Ascending aorta (tissue), 2 donors: ENCODE measurements at regions of chr6 and their contacts with region 1.

Region 1: GRCh38 chr6:10694302-10695085 is at the starts of genes C6orf52 and PAK1IP1:
- DNase-seq: peak; percentile 77 to 97
- H3K4me3 ChIP-seq: peak within 1 kb of the TSS; percentile 72 to 87
- H3K27ac ChIP-seq: peak within 1 kb of the TSS; percentile 85 to 95
- H3K4me1 ChIP-seq: peaks cover 0 to 23% of the 10 kb centered on the region in 2 donors
- H3K27me3 ChIP-seq: no peaks in the 10 kb centered on the region
- CTCF ChIP-seq: no peak
- total RNA-seq, gene C6orf52: not detected
- total RNA-seq, gene PAK1IP1: 6.1 TPM

Region 2: DNA sequence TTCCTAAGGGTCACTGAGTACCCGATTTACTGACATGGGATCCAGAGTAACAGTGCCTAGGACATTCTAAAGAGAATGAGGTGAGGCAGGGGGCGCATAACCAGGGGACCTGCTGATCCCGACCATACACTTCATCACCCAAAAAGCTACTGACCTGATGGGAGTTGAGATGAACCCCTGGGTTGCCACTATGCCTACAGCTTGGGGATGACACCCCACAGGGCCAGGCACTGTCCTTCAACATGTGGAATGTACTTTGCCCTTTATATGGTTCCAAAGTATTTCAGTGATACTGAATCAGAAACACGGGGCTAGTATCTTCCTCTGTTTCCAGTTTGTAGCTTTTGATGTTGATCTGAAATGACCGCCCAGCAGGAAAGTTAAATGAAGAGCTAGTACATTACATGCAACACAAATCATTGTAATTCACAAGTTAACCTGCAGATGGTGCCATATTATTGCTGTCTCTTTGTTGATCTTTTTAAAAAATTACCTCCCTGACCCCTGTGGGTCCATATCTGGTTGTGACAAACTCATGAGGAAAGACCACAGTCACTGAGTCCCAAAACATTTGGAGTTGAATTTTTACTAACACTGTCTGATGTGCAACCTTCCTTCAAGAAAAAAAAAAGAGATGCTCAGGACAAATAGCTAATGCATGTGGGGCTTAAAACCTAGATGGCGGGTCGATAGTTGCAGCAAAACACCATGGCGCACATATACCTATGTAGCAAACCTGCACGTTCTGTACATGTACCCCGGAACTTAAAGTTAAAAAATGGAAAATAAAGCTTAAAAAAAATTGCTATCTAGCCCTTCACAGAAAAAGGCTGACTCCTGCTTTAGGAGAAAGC is 216.1 kb before region 1 on chr6:
- intact Hi-C with region 1: no loop called
- DNase-seq: no peak
- H3K4me3 ChIP-seq: no peak overlapping the region
- H3K27ac ChIP-seq: no peak overlapping the region
- H3K4me1 ChIP-seq: no peaks in the 10 kb centered on the region
- H3K27me3 ChIP-seq: no peaks in the 10 kb centered on the region
- CTCF ChIP-seq: peak; percentile 27 to 64 (median 52)

Region 3: DNA sequence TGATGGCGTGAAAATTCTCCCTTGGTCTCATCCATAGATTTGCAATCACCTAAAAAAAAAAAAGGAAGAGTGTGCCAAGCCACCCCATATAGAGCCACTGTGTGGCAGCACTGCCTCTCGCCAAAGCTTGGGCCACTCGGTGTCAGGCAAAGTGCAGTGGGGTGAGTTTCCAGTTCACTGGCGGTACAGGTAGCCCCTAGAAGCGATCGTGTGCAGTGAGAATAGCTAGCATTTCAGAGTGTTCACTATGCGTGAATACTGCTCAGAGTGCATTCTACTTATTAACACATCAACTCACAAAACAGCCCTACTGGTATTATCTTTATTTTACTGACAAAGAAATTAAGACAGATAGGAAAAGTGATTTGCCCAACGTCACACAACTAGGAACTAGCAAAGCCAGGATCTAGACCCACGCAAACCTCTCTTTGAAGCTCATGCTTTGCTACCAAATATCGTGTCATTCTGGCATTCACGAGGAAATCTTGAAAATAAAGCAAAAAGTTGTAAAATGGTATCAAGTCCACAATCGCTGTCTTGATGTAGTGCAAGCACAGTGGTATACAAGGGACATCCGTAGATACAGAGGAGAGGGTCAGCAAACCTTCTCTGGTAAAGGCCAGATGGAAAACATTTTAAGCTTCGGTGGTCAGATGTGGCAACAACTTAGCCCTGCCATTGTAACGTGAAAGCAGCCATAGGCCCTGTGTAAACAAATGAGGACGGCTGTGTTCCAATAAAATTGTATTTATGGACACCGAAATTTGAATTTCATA is 183.7 kb before region 1 on chr6:
- intact Hi-C with region 1: loop called (anchors 1 kb)
- DNase-seq: peak in 1 of 2 donors; percentile 75
- H3K4me3 ChIP-seq: peak overlapping the region in 1 of 2 donors; percentile 48
- H3K27ac ChIP-seq: peak overlapping the region; percentile 47 to 62
- H3K4me1 ChIP-seq: peaks cover 0 to 5% of the 10 kb centered on the region in 2 donors
- H3K27me3 ChIP-seq: no peaks in the 10 kb centered on the region
- CTCF ChIP-seq: peak; percentile 47 to 80 (median 71)

Region 4: GRCh38 chr6:10643201-10643651 is 51.3 kb before region 1 on chr6:
- intact Hi-C with region 1: loop called (anchors 2 kb)
- DNase-seq: no peak
- H3K4me3 ChIP-seq: no peak overlapping the region
- H3K27ac ChIP-seq: no peak overlapping the region
- H3K4me1 ChIP-seq: peaks cover 0 to 3% of the 10 kb centered on the region in 2 donors
- H3K27me3 ChIP-seq: no peaks in the 10 kb centered on the region
- CTCF ChIP-seq: no peak

Region 5: DNA sequence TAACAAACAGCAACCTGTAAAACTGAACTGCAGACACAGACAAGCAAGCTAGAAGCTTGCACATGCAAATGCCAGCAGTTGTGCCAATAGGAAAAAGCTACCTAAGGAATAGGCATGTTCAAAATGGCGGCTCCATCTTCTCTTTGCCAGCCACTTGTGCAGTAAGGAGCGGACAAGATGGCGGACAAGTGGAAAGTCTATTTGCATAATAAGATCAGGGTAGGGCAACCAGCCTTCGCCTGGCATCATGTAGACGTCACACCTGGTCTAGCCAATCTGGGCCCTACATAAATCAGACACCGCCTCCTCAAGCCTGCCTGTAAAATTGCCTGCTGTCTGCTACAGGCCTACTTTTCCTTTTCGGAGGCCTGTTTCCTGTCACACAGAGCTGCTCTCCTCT is 18.1 kb before region 1 on chr6:
- intact Hi-C with region 1: no loop called
- DNase-seq: no peak
- H3K4me3 ChIP-seq: no peak overlapping the region
- H3K27ac ChIP-seq: no peak overlapping the region
- H3K4me1 ChIP-seq: no peaks in the 10 kb centered on the region
- H3K27me3 ChIP-seq: no peaks in the 10 kb centered on the region
- CTCF ChIP-seq: no peak

Region 6: DNA sequence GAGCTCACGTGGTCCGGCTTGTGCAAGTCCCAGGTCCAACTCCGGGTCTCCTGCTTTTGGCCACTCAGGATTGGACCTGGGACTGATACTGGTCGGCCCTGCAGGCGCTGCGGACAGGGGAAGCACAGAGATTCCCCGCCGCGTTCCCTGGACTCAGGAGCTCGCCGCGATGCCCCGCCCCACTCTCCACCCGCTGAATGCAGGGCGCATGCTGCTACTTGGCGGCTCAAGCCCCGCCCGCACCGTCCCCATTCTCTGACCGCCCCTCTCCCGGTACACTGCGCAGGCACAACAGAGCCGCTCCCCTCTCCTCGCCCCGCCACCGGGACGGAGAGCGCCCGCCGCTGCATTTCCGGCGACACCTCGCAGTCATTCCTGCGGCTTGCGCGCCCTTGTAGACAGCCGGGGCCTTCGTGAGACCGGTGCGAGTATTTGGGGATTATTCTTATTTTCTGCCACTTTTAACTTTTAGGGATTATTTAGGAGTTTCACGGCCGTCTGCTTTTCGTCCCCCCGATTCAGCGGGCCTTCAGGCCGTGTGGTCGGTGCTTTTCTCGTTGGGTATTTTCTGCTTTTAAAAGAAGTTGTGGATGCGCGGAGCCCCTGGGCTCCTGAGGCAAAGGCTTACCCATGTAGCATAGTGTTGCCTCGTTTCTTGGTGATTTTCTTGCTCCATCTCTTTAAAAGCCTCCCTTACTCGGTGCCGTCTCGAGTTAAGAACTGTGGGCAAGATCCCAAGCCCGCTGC is 28.5 kb after region 1 on chr6 and contains the start of gene TMEM14C:
- intact Hi-C with region 1: loop called (anchors 1 kb)
- DNase-seq: peak; percentile 95 to 100
- H3K4me3 ChIP-seq: peak within 1 kb of the TSS; percentile 66 to 91
- H3K27ac ChIP-seq: peak within 1 kb of the TSS; percentile 82 to 92
- H3K4me1 ChIP-seq: peaks cover 7 to 20% of the 10 kb centered on the region in 2 donors
- H3K27me3 ChIP-seq: no peaks in the 10 kb centered on the region
- CTCF ChIP-seq: no peak
- total RNA-seq, gene TMEM14C: 79.6 TPM

Region 7: GRCh38 chr6:10735024-10735356 is 40.5 kb after region 1 on chr6:
- intact Hi-C with region 1: loop called (anchors 5 kb)
- DNase-seq: no peak
- H3K4me3 ChIP-seq: no peak overlapping the region
- H3K27ac ChIP-seq: no peak overlapping the region
- H3K4me1 ChIP-seq: no peaks in the 10 kb centered on the region
- H3K27me3 ChIP-seq: no peaks in the 10 kb centered on the region
- CTCF ChIP-seq: no peak

Region 8: GRCh38 chr6:10747251-10747972 is 52.9 kb after region 1 on chr6 and contains the start of gene TMEM14B:
- intact Hi-C with region 1: loop called (anchors 1 kb)
- DNase-seq: peak; percentile 95 to 100
- H3K4me3 ChIP-seq: peak within 1 kb of the TSS; percentile 87 to 88
- H3K27ac ChIP-seq: peak within 1 kb of the TSS; percentile 77 to 78
- H3K4me1 ChIP-seq: peaks cover 14 to 20% of the 10 kb centered on the region in 2 donors
- H3K27me3 ChIP-seq: no peaks in the 10 kb centered on the region
- CTCF ChIP-seq: no peak
- total RNA-seq, gene TMEM14B: 59.1 TPM